Activated T-helper 2 cell treated with anti-CD3 and anti-CD28 coated beads, Interferon-gamma antibody, Interleukin-2, Interleukin-4, amounts not matched to agents 10 μg/mL and 5 μg/mL and 100 μg/mL, durations not matched to agents 14 hours and 24 hours and 36 hours (primary cell): ENCODE measurements at regions of chr6 and their contacts with region 1.

Region 1: GRCh38 chr6:130132286-130132701 is 90.5 kb downstream of the SAMD3 start:
- DNase-seq: peak; percentile 77
- H3K4me3 Mint-ChIP-seq: peak overlapping the region; percentile 43
- H3K27ac Mint-ChIP-seq: peak overlapping the region; percentile 74
- H3K4me1 Mint-ChIP-seq: peaks cover 85% of the 10 kb centered on the region
- H3K27me3 Mint-ChIP-seq: no peaks in the 10 kb centered on the region

Region 2: GRCh38 chr6:130027948-130028347 is 104.3 kb before region 1 on chr6:
- intact Hi-C with region 1: loop called (anchors 2 kb)
- DNase-seq: no peak
- H3K4me3 Mint-ChIP-seq: no peak overlapping the region
- H3K27ac Mint-ChIP-seq: peak overlapping the region; percentile 67
- H3K4me1 Mint-ChIP-seq: peaks cover 36% of the 10 kb centered on the region
- H3K27me3 Mint-ChIP-seq: peaks cover 3% of the 10 kb centered on the region

Region 3: DNA sequence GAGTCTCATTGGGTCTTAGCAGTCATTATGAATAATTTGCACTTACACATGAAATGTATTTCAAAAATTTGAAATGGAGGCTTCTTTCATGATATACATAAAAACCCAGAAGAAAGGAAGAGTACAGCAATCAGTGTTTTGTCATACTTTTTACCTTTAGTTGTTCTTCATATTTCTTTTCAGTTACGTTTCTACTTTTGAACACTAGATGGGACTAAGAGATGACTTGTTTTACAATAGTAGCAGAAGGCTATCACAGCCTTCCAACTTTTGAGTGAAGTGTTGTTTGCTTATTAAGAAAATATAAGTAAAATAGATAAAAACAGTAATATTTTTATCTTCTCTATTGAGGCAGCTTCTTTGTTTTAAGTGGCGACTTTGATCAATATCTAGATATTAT is 55.8 kb before region 1 on chr6:
- intact Hi-C with region 1: loop called (anchors 5 kb)
- DNase-seq: no peak
- H3K4me3 Mint-ChIP-seq: no peak overlapping the region
- H3K27ac Mint-ChIP-seq: no peak overlapping the region
- H3K4me1 Mint-ChIP-seq: peaks cover 22% of the 10 kb centered on the region
- H3K27me3 Mint-ChIP-seq: no peaks in the 10 kb centered on the region

Region 4: GRCh38 chr6:130215526-130215925 is 83.2 kb after region 1 on chr6:
- intact Hi-C with region 1: loop called (anchors 2 kb)
- DNase-seq: peak; percentile 31
- H3K4me3 Mint-ChIP-seq: peak overlapping the region; percentile 52
- H3K27ac Mint-ChIP-seq: peak overlapping the region; percentile 68
- H3K4me1 Mint-ChIP-seq: peaks cover 44% of the 10 kb centered on the region
- H3K27me3 Mint-ChIP-seq: no peaks in the 10 kb centered on the region

Region 5: DNA sequence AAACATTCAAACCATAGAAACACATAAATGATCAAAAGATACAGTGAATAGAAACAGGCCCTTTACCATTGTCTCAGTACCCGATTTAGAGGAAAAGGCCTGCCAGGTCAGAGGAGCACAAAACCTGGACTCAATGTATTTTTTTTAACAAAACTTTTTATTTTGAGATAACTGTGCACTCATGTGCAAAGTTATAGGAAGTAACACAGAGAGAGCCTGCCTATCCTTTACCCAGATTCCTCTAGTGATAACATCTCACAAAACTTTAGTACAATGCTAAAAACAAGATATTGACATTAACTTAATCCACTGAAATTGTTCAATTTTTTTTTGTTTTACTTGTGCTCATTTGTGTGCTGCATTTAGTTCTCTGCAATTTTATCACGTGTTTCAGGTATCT is 127.3 kb after region 1 on chr6:
- intact Hi-C with region 1: loop called (anchors 2 kb)
- DNase-seq: no peak
- H3K4me3 Mint-ChIP-seq: peak overlapping the region; percentile 23
- H3K27ac Mint-ChIP-seq: peak overlapping the region; percentile 64
- H3K4me1 Mint-ChIP-seq: peaks cover 36% of the 10 kb centered on the region
- H3K27me3 Mint-ChIP-seq: no peaks in the 10 kb centered on the region

Region 6: GRCh38 chr6:130269969-130270635 is 137.8 kb after region 1 on chr6:
- intact Hi-C with region 1: no loop called
- DNase-seq: no peak
- H3K4me3 Mint-ChIP-seq: no peak overlapping the region
- H3K27ac Mint-ChIP-seq: no peak overlapping the region
- H3K4me1 Mint-ChIP-seq: peaks cover 5% of the 10 kb centered on the region
- H3K27me3 Mint-ChIP-seq: no peaks in the 10 kb centered on the region

Region 7: DNA sequence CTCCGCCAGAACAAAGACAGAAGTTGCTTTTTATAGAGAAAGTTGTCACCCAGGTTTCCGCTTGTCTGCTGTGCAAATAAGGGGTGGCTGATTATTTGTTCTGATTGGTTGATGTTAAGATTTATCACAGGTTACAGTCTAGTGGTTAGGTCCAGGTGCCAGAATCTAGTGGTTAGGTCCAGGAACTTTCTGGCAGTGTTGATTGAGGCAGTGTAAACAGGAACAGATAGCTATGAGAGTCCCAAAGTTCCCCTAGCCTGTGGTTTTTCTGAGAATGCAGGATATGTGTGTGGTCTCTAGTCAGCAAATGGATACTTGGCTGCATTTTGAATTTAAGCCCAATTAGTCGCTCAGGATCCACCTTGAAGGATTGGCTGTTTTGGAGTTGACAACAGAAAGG is 381.5 kb after region 1 on chr6:
- intact Hi-C with region 1: loop called (anchors 1 kb)
- DNase-seq: peak; percentile 76
- H3K4me3 Mint-ChIP-seq: no peak overlapping the region
- H3K27ac Mint-ChIP-seq: peak overlapping the region; percentile 88
- H3K4me1 Mint-ChIP-seq: peaks cover 57% of the 10 kb centered on the region
- H3K27me3 Mint-ChIP-seq: no peaks in the 10 kb centered on the region